Calu3 (cell line): ENCODE measurements at regions of chr7 and their contacts with region 1.

Region 1: DNA sequence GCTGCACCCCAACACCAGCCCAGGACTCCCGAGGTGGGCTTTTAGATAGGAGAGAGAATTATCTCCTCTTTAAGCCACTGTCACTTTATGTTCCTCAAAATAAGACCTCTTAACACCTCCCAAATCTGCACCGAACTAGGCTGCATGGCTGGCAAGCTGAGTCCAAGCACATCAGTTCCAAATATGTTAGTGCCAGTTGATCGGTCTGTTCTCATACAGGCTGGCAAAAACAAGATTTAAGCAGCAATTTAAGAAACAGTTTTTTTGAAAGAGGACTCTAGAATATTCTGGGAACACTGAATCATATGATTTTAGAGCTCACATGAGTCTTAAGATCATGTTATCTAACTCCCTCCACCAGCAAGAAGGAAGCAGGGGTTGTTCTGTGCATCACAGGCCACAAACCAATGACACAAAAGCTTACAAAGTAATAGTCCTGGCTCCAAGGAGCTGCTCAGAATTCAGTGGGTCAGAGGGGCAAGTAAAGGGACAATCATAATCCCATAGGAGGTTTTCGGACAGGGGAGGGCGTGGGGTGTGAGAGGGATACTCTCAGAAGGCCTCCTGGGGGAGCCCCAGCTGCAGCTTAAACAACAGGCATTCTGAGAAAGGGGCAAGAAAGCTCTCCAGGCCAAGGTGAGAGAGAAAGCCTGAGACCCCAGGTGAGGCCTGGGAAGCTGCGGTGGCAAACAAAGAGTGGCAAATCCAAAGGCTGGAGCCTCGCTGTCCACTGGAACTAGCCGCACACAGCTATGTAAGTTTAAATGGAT is 7.1 kb downstream of the COBL start:
- DNase-seq: no peak
- H3K4me3 Mint-ChIP-seq: no peak overlapping the region
- H3K27ac Mint-ChIP-seq: no peak overlapping the region
- H3K4me1 Mint-ChIP-seq: peaks cover 23% of the 10 kb centered on the region
- H3K27me3 Mint-ChIP-seq: no peaks in the 10 kb centered on the region
- CTCF ChIP-seq: no peak

Region 2: DNA sequence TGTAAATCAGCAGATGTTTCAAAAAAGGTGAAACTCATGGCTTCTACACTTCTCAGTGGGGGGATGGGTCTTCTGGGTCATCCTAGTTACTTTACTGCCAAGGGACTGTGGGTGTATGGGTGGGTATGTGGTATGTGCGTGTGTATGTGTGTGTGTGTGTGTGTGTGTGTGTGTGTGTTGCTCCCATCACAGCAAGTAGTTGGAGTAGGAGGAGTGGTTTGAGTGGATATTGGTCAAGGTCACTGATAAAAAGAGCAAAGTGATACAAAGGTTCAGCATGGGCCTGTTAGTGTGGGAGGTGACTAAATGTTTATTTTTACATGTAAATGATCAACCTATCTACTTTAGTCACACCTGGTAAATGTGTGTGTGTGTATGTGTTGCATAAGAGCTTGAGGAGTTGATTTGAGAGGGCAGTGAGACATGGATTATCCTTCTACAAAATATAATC is 18.8 kb after region 1 on chr7:
- CTCF ChIA-PET with region 1: interaction called, 14 read pairs
- intact Hi-C with region 1: no loop called
- DNase-seq: peak; percentile 36
- H3K4me3 Mint-ChIP-seq: no peak overlapping the region
- H3K27ac Mint-ChIP-seq: no peak overlapping the region
- H3K4me1 Mint-ChIP-seq: peaks cover 43% of the 10 kb centered on the region
- H3K27me3 Mint-ChIP-seq: no peaks in the 10 kb centered on the region
- CTCF ChIP-seq: no peak